K562 (cell line): ENCODE measurements at regions of chr9 and their contacts with region 1.

Region 1: GRCh38 chr9:125272697-125273096 is 11.1 kb downstream of the GAPVD1 start:
- DNase-seq: no peak
- ATAC-seq: no peak
- H3K4me3 ChIP-seq: no peak overlapping the region
- H3K27ac ChIP-seq: peak overlapping the region; percentile 44; the same call in 2 of the 3 replicates
- H3K4me1 ChIP-seq: peaks cover 10 to 15% of the 10 kb centered on the region in 2 experiments; a peak in 4 of 5 replicates
- H3K27me3 ChIP-seq: no peaks in the 10 kb centered on the region
- CTCF ChIP-seq: no peak
- EP300 ChIP-seq: no peak
- POLR2A ChIP-seq: no peak
- RAD21 ChIP-seq: no peak

Region 2: GRCh38 chr9:125126019-125126746 is 146.5 kb before region 1 on chr9:
- CTCF ChIA-PET with region 1: no interaction called
- POLR2A ChIA-PET with region 1: no interaction called
- in situ Hi-C with region 1: no loop called
- intact Hi-C with region 1: no loop called
- DNase-seq: peak in 3 of 4 experiments; percentile 26 to 73 (median 34)
- ATAC-seq: peak; percentile 88
- H3K4me3 ChIP-seq: no peak overlapping the region
- H3K27ac ChIP-seq: peak overlapping the region; percentile 16; the same call in 2 of the 3 replicates
- H3K4me1 ChIP-seq: peaks cover 11 to 21% of the 10 kb centered on the region in 2 experiments; a peak in 3 of 5 replicates
- H3K27me3 ChIP-seq: no peaks in the 10 kb centered on the region
- CTCF ChIP-seq: no peak
- EP300 ChIP-seq: no peak
- POLR2A ChIP-seq: no peak
- RAD21 ChIP-seq: no peak

Region 3: GRCh38 chr9:125261501-125262293 is 11.0 kb before region 1 on chr9 and contains the start of gene GAPVD1:
- CTCF ChIA-PET with region 1: no interaction called
- POLR2A ChIA-PET with region 1: interaction called, 22 read pairs
- in situ Hi-C with region 1: no loop called
- intact Hi-C with region 1: no loop called
- DNase-seq: peak; percentile 97 to 99 (median 98)
- ATAC-seq: peak; percentile 96
- H3K4me3 ChIP-seq: peak within 1 kb of the TSS; percentile 97
- H3K27ac ChIP-seq: peak within 1 kb of the TSS; percentile 99
- H3K4me1 ChIP-seq: peaks cover 18 to 22% of the 10 kb centered on the region in 2 experiments; a peak in 4 of 5 replicates
- H3K27me3 ChIP-seq: no peaks in the 10 kb centered on the region
- CTCF ChIP-seq: peak; percentile 62 to 73 (median 62); a peak in 5 of 6 replicates
- EP300 ChIP-seq: 0 out of 2 replicates have a peak, but pooled peaks have one; percentile 16
- POLR2A ChIP-seq: peak; percentile 90
- RAD21 ChIP-seq: no peak
- polyA plus RNA-seq, gene GAPVD1: 9.5 to 12.0 TPM

Region 4: GRCh38 chr9:125284855-125285254 is 12.2 kb after region 1 on chr9:
- CTCF ChIA-PET with region 1: no interaction called
- POLR2A ChIA-PET with region 1: interaction called, 12 read pairs
- in situ Hi-C with region 1: no loop called
- intact Hi-C with region 1: no loop called
- DNase-seq: peak; percentile 75 to 95 (median 80)
- ATAC-seq: peak; percentile 86
- H3K4me3 ChIP-seq: no peak overlapping the region
- H3K27ac ChIP-seq: peak overlapping the region; percentile 81
- H3K4me1 ChIP-seq: peaks cover 25 to 41% of the 10 kb centered on the region in 2 experiments
- H3K27me3 ChIP-seq: no peaks in the 10 kb centered on the region
- CTCF ChIP-seq: no peak
- EP300 ChIP-seq: peak; percentile 100
- POLR2A ChIP-seq: no peak
- RAD21 ChIP-seq: peak in 1 of 2 experiments; percentile 23; a peak in 1 of 4 replicates

Region 5: GRCh38 chr9:125472926-125473701 is 200.4 kb after region 1 on chr9:
- CTCF ChIA-PET with region 1: no interaction called
- POLR2A ChIA-PET with region 1: no interaction called
- in situ Hi-C with region 1: no loop called
- intact Hi-C with region 1: no loop called
- DNase-seq: peak; percentile 62 to 91 (median 76)
- ATAC-seq: peak; percentile 83
- H3K4me3 ChIP-seq: peak overlapping the region; percentile 15; the same call in 1 of the 2 replicates
- H3K27ac ChIP-seq: peak overlapping the region; percentile 80
- H3K4me1 ChIP-seq: peaks cover 32 to 67% of the 10 kb centered on the region in 2 experiments
- H3K27me3 ChIP-seq: no peaks in the 10 kb centered on the region
- CTCF ChIP-seq: 0 out of 6 replicates have a peak, but pooled peaks have one; percentile 3 to 22 (median 6)
- EP300 ChIP-seq: peak; percentile 94
- POLR2A ChIP-seq: no peak
- RAD21 ChIP-seq: peak in 1 of 2 experiments; percentile 19; a peak in 2 of 4 replicates

Region 6: DNA sequence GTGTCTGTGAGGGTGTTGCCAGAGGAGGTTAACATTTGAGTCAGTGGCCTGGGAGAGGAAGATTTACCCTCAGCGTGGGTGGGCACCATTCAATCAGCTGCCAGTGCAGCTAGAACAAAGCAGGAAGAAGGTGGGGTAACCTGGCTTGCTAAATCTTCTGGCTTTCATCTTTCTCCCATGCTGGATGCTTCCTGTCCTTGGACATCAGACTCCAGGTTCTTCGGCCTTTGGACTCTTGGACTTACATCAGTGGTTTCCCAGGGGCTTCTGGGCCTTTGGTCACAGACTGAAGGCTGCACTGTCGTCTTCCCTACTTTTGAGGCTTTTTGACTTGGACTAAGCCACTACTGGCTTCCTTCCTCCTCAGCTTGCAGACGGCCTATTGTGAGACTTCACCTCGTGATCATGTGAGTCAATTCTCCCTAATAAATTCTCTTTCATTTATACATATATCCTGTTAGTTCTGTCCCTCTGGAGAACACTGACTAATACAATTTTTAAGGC is 512.6 kb after region 1 on chr9:
- CTCF ChIA-PET with region 1: no interaction called
- POLR2A ChIA-PET with region 1: no interaction called
- in situ Hi-C with region 1: no loop called
- intact Hi-C with region 1: no loop called
- DNase-seq: no peak
- ATAC-seq: no peak
- H3K4me3 ChIP-seq: no peak overlapping the region
- H3K27ac ChIP-seq: no peak overlapping the region
- H3K4me1 ChIP-seq: no peaks in the 10 kb centered on the region; a peak in 1 of 5 replicates
- H3K27me3 ChIP-seq: peaks cover 2 to 6% of the 10 kb centered on the region in 2 experiments; a peak in 3 of 5 replicates
- CTCF ChIP-seq: no peak
- EP300 ChIP-seq: no peak
- POLR2A ChIP-seq: no peak
- RAD21 ChIP-seq: no peak